ENCODE measurements at regions of chr1 and their contacts with region 1.

Region 1: GRCh38 chr1:201970334-201971159 is 11.9 kb upstream of the RNPEP start:
- DNase-seq: no peak

Region 2: DNA sequence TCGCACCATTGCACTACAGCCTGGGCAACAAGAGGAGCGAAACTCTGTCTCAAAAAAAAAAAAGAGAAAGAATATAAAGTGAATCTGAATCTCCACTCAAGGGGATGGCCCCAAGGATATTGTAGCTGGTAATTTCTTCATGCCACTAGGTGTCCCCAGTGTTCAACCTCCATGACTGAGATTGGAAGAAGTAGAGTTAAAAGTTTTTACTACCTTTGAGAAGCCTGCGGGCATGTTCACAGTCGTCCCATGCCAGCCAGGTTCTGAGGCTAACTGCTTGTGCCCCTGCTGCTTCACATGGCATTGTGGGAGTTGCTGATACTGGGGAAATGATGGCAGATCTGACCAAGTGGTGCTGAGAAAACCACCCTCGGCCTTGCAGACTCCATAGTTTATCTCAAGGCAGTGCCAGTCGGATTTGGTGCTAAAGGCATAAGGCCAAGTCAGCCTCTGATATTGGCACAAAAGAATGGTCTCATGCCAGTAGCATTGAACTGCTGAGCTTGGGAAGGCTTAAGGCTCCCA is 92.6 kb before region 1 on chr1:
- intact Hi-C with region 1: loop called in 1 of 2 experiments (anchors 5 kb)
- DNase-seq: no peak

Region 3: GRCh38 chr1:201885531-201886075 is 84.9 kb before region 1 on chr1:
- intact Hi-C with region 1: loop called in 1 of 2 experiments (anchors 5 kb)
- DNase-seq: no peak

Region 4: DNA sequence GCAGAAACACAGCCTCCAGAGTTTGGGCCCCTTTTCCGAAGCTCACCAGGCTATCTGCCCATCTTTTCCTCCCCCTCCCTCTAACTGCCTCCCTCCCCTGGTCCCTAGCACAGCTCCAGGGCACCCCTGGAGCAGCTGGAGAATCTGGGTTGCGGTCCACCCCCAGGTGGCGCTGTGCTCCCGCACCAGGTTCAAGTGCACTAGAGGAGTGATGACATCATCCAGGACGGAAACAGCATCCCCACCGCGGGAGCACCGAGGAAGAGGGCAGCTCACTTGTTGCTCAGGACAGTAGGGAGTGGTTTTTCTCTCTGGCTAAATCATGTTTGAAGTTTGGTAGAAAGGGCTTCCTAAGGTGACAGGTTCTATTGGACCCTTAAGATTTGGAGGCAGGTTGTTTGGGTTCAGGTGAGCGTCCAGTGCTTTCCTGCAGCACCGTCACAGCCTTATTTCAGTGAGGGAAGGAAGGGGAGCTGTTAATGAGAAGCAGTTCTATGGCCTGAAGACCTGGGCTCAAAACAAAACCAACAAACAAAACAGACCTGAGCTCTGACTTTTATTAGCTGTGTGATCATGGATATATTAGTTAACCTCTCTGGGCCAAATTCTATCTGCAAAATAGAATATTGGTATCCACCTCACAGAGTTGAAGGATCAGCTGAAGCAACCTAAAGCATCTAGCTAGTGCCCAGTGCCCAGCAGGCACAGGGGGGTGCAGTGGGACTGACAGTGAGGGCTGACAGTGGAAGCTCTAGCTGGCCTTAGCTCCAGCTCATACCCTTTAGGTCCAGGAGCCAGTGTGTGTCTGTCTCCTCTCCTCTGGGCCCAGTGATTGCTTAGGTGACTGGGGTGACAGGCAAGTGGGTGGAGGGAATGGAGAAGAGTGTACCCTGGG is 74.4 kb before region 1 on chr1:
- intact Hi-C with region 1: loop called (anchors 2 to 5 kb)
- DNase-seq: peak; percentile 97

Region 5: GRCh38 chr1:202710070-202711045 is 739.8 kb after region 1 on chr1 and contains the start of gene SYT2:
- intact Hi-C with region 1: no loop called
- DNase-seq: peak; percentile 82
- total RNA-seq, gene SYT2: not detected

Region 6: DNA sequence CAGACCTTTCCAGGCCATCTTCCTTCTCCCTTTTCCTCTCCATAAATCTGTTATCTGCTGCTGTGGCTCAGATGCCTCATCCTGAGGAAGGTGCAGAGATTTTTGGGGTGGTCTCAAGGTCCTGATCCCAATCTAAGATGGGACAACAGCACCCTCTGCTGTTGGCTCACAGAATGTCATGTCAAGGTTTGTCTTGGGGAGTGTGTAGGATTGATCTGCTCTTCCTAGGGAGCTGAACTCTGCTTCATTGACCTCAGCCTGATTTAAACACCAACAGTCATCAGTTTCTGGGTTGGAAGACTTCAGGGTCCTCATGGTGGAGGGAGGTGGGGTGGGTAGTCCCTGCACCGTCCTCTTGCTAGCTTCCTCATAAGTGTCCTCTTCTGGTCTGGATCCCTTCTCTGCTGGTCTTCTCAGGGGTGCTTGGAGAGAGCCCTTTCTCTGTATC is 1731.6 kb after region 1 on chr1:
- intact Hi-C with region 1: no loop called
- DNase-seq: no peak

Measured in posterior vena cava (tissue), 2 donors.